Cardiac septum (tissue), 1 donor: ENCODE measurements at regions of chr12 and their contacts with region 1.

Region 1: DNA sequence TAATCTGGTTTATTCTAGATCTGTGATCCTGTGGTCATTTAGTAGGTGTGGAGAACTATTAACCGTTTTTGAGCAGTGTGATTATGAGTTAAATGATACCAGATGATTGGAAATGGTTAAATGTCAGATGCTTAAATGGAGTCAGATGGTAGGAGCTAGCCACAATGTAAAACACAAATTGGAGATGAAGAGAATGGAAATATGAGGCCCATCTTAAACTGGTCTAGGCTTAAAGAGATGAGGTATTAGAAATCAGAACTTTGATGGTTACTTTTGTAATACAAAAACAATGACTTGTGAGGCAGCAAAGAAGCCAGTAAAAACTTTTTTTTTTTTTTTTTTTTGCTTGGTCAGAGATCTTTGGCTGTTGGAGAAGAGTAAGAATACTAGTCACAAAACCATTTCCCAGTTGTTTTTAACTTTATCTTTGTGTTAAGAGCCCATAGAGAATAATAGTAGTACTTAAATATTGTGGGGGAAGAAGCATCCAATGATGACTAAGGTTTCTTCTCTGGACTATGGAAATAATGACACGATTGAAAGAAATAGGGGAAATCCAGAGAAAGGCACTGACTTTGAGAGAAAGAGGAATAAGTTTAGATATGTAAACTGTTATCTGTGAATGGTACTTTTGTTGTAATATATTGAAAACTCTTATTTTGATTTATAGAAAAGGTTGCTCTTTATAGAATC is 95.9 kb downstream of the WNK1 start:
- DNase-seq: no peak

Region 2: GRCh38 chr12:761256-761655 is 87.1 kb before region 1 on chr12:
- intact Hi-C with region 1: no loop called
- DNase-seq: no peak

Region 3: GRCh38 chr12:896031-896430 is 47.7 kb after region 1 on chr12:
- intact Hi-C with region 1: loop called (anchors 10 kb)
- DNase-seq: no peak